HAP-1 (cell line): ENCODE measurements at regions of chr7 and their contacts with region 1.

Region 1: GRCh38 chr7:130242198-130243014 is 24.3 kb upstream of the CPA2 start:
- DNase-seq: peak; percentile 52 to 83
- H3K4me3 ChIP-seq: no peak overlapping the region
- H3K4me1 ChIP-seq: no peaks in the 10 kb centered on the region
- H3K27me3 ChIP-seq: no peaks in the 10 kb centered on the region; the same call in 1 of the 2 replicates

Region 2: DNA sequence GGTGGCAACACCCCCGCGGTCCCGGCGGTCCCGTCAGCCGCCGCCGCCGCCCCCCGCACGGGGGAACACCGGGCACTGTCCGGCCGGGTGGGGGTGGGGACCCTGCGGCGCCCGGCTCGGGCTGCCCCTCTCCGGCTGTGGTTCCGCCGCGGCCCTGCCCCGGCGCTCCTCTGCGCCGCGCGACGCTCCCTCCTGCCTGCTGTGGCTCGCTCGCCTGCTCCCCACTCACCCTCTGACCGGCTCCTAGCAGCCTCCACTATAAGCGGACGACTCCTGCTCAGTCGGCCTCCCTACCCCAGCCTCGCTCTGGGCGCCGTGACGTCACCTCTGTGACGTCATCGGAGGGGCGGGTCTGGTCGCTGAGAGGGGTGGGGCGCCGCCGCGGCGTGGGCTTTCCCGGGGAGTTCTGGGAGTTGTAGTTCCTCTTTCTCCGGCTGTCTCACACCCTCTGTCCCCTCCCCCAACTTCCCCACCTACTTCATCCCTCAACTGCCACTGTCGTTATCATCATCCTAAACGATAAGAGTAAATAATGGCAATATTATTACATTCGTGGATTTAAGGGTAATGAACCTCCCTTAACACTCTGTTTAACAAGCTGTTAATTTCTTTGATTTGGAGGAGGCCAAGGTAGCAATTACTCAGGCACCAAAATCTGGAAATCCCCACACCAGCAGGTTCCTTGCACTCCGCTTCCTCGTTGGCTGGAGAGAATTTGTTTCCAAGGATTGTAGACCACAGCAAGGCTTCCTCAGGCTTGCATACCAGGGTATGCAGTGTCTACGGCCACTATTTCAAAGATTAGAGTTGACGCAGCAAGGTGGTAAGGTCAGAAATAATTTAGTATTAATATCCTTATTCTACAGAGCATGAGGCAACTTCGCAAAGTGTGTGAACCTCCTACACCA is 289.5 kb before region 1 on chr7 and contains the start of gene UBE2H:
- in situ Hi-C with region 1: no loop called
- DNase-seq: peak; percentile 78 to 91
- H3K4me3 ChIP-seq: peak within 1 kb of the TSS; percentile 72
- H3K4me1 ChIP-seq: peaks cover 20% of the 10 kb centered on the region
- H3K27me3 ChIP-seq: no peaks in the 10 kb centered on the region

Region 3: GRCh38 chr7:130758429-130759056 is 516.1 kb after region 1 on chr7:
- in situ Hi-C with region 1: loop called (anchors 25 kb)
- DNase-seq: peak in 1 of 2 experiments; percentile 65
- H3K4me3 ChIP-seq: no peak overlapping the region
- H3K4me1 ChIP-seq: no peaks in the 10 kb centered on the region
- H3K27me3 ChIP-seq: peaks cover 4% of the 10 kb centered on the region